ENCODE measurements at regions of chr3 and their contacts with region 1.

Region 1: GRCh38 chr3:156674046-156674910 is at the start of gene TIPARP:
- DNase-seq: peak; percentile 100
- ATAC-seq: peak; percentile 81
- H3K4me3 ChIP-seq: peak within 1 kb of the TSS; percentile 80 to 96 (median 81)
- H3K4me3 Mint-ChIP-seq: peak within 1 kb of the TSS; percentile 91
- H3K27ac ChIP-seq: peak within 1 kb of the TSS; percentile 86 to 94
- H3K27ac Mint-ChIP-seq: peak within 1 kb of the TSS; percentile 99
- H3K4me1 ChIP-seq: peaks cover 25 to 30% of the 10 kb centered on the region in 2 donors
- H3K4me1 Mint-ChIP-seq: peaks cover 47% of the 10 kb centered on the region
- H3K27me3 ChIP-seq: no peaks in the 10 kb centered on the region
- H3K27me3 Mint-ChIP-seq: no peaks in the 10 kb centered on the region
- CTCF ChIP-seq: peak; percentile 83
- total RNA-seq, gene TIPARP: 40.9 and 42.5 TPM in 2 replicates

Region 2: DNA sequence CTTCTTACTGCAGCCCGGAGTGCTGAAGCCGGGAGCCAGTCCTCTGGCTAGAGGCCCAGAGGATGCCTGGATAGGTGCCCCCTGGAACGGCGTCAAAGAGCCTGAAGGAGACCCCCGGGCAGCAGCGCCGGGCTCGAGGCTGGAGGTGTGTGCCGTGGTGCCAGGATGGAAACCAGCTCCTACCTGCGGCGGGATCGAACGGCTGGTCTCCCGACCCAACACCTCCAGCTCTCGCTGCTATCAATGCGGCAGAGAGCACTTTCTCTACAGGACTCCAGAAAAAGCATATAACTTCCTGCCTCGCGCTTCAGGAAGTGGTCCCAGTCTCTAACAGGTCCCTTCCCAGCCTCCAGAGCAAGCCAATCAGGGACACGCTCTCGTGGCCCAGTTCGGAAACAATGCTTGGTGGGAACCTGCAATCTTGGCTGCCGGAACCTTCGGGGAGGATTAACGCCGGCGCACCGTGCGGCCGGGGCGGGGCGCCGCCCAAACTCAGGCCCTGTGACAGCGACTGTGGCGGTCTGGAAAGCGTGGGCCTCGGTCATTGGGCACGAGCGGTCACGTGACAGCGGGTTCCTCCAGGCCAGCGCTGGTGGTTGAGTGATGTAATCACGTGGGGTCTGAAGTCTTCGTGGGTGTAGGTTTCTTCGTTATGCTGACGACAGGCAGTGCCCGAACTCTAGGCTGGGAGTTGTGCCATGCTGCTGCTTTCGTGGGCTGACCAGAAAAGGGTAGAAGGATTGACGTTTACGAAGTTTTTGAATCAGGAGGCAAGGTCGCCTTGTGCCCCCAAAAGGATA is 819.9 kb before region 1 on chr3 and contains the start of gene SLC33A1:
- CTCF ChIA-PET with region 1: no interaction called
- POLR2A ChIA-PET with region 1: no interaction called
- intact Hi-C with region 1: loop called (anchors 2 kb)
- DNase-seq: peak; percentile 100
- ATAC-seq: peak; percentile 90
- H3K4me3 ChIP-seq: peak within 1 kb of the TSS; percentile 82 to 99 (median 92)
- H3K4me3 Mint-ChIP-seq: peak within 1 kb of the TSS; percentile 97
- H3K27ac ChIP-seq: peak within 1 kb of the TSS; percentile 90 to 97
- H3K27ac Mint-ChIP-seq: peak within 1 kb of the TSS; percentile 99
- H3K4me1 ChIP-seq: peaks cover 25 to 37% of the 10 kb centered on the region in 2 donors
- H3K4me1 Mint-ChIP-seq: peaks cover 36% of the 10 kb centered on the region
- H3K27me3 ChIP-seq: no peaks in the 10 kb centered on the region
- H3K27me3 Mint-ChIP-seq: no peaks in the 10 kb centered on the region
- CTCF ChIP-seq: no peak
- total RNA-seq, gene SLC33A1: 26.9 and 29.4 TPM in 2 replicates

Region 3: GRCh38 chr3:156509189-156510174 is 164.8 kb before region 1 on chr3:
- CTCF ChIA-PET with region 1: interaction called, 14 read pairs
- POLR2A ChIA-PET with region 1: no interaction called
- intact Hi-C with region 1: no loop called
- DNase-seq: peak; percentile 66
- ATAC-seq: peak; percentile 57
- H3K4me3 ChIP-seq: no peak overlapping the region
- H3K4me3 Mint-ChIP-seq: no peak overlapping the region
- H3K27ac ChIP-seq: no peak overlapping the region
- H3K27ac Mint-ChIP-seq: no peak overlapping the region
- H3K4me1 ChIP-seq: no peaks in the 10 kb centered on the region
- H3K4me1 Mint-ChIP-seq: no peaks in the 10 kb centered on the region
- H3K27me3 ChIP-seq: peaks cover 0 to 4% (median 2%) of the 10 kb centered on the region in 4 experiments
- H3K27me3 Mint-ChIP-seq: peaks cover 23% of the 10 kb centered on the region
- CTCF ChIP-seq: peak; percentile 81

Region 4: GRCh38 chr3:156816800-156817645 is 142.7 kb after region 1 on chr3:
- CTCF ChIA-PET with region 1: interaction called, 4 read pairs
- POLR2A ChIA-PET with region 1: interaction called, 24 read pairs
- intact Hi-C with region 1: loop called (anchors 1 kb)
- DNase-seq: peak; percentile 94
- ATAC-seq: peak; percentile 85
- H3K4me3 ChIP-seq: peak overlapping the region; percentile 42 to 86 (median 77)
- H3K4me3 Mint-ChIP-seq: peak overlapping the region; percentile 97
- H3K27ac ChIP-seq: peak overlapping the region; percentile 56 to 80
- H3K27ac Mint-ChIP-seq: peak overlapping the region; percentile 99
- H3K4me1 ChIP-seq: peaks cover 13 to 16% of the 10 kb centered on the region in 2 donors
- H3K4me1 Mint-ChIP-seq: peaks cover 43% of the 10 kb centered on the region
- H3K27me3 ChIP-seq: no peaks in the 10 kb centered on the region
- H3K27me3 Mint-ChIP-seq: no peaks in the 10 kb centered on the region
- CTCF ChIP-seq: no peak

Region 5: DNA sequence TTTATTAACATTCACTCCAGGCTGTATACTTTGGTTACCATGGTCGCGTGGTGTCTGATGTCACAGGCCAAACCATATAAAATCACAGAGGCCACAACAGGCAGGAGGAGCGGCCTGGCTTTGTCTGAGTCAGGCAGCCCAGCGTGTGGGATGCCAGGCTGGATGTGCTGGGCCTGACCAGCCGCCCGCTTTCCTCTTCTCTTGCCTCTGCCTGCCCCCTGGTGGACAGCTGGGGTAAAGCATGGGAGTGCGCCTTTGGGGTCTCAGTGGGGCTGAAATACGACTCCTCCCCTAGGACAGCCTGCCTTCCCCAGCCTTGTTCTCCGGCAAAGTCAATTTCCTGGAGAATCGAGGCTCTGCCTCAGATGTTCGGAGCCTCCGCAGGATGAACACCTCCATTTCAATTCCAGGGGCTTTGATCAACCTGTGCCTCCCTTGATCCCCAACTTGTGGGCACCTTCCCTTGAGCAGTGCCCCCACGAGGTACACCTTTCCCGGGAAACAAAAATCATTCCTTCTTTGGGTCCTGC is 407.5 kb after region 1 on chr3:
- CTCF ChIA-PET with region 1: interaction called, 63 read pairs
- POLR2A ChIA-PET with region 1: interaction called, 12 read pairs
- intact Hi-C with region 1: loop called (anchors 1 kb)
- DNase-seq: peak; percentile 86
- ATAC-seq: peak; percentile 99
- H3K4me3 ChIP-seq: no peak overlapping the region
- H3K4me3 Mint-ChIP-seq: peak overlapping the region; percentile 2
- H3K27ac ChIP-seq: no peak overlapping the region
- H3K27ac Mint-ChIP-seq: peak overlapping the region; percentile 63
- H3K4me1 ChIP-seq: peaks cover 9 to 11% of the 10 kb centered on the region in 2 donors
- H3K4me1 Mint-ChIP-seq: peaks cover 11% of the 10 kb centered on the region
- H3K27me3 ChIP-seq: peaks cover 0 to 4% (median 0%) of the 10 kb centered on the region in 4 experiments
- H3K27me3 Mint-ChIP-seq: peaks cover 8% of the 10 kb centered on the region
- CTCF ChIP-seq: peak; percentile 96

Region 6: GRCh38 chr3:157159762-157160657 is 485.7 kb after region 1 on chr3 and contains the start of gene CCNL1:
- CTCF ChIA-PET with region 1: interaction called, 3 read pairs
- POLR2A ChIA-PET with region 1: interaction called, 3 read pairs
- intact Hi-C with region 1: loop called (anchors 1 kb)
- DNase-seq: peak; percentile 99
- ATAC-seq: peak; percentile 81
- H3K4me3 ChIP-seq: peak within 1 kb of the TSS; percentile 78 to 100 (median 95)
- H3K4me3 Mint-ChIP-seq: peak within 1 kb of the TSS; percentile 99
- H3K27ac ChIP-seq: peak within 1 kb of the TSS; percentile 99 to 100
- H3K27ac Mint-ChIP-seq: peak within 1 kb of the TSS; percentile 100
- H3K4me1 ChIP-seq: peaks cover 46 to 48% of the 10 kb centered on the region in 2 donors
- H3K4me1 Mint-ChIP-seq: peaks cover 51% of the 10 kb centered on the region
- H3K27me3 ChIP-seq: no peaks in the 10 kb centered on the region
- H3K27me3 Mint-ChIP-seq: no peaks in the 10 kb centered on the region
- CTCF ChIP-seq: no peak
- total RNA-seq, gene CCNL1: 309 and 322 TPM in 2 replicates

Measured in B cell (primary cell).